PC-9 (cell line): ENCODE measurements at regions of chr3 and their contacts with region 1.

Region 1: GRCh38 chr3:33074217-33075067 is 22.5 kb downstream of the GLB1 start:
- DNase-seq: peak; percentile 38 to 39
- H3K4me3 ChIP-seq: no peak overlapping the region
- H3K27ac ChIP-seq: no peak overlapping the region
- H3K4me1 ChIP-seq: no peaks in the 10 kb centered on the region
- H3K27me3 ChIP-seq: no peaks in the 10 kb centered on the region
- CTCF ChIP-seq: peak; percentile 78

Region 2: DNA sequence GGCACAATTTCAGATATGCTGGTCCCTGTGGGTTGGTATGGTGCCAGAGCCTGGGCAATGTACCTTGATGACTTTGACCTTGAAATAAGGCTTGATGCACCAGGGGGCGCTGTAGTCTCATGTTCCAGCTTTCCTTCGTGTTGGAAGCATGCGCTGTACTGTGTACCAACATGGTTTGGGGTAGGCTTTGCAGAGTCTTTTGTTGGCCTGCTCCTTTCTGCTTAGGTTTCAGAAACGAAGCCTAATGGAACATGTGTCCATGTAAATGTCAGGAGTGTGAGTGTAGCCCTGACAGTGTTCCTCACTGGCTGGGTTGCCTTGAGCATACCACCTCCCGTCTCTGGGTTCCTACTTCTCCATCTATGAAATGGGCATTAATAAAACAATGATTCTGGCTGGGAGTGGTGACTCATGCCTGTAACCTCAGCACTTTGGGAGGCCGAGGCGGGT is 126.6 kb before region 1 on chr3:
- CTCF ChIA-PET with region 1: no interaction called
- POLR2A ChIA-PET with region 1: no interaction called
- intact Hi-C with region 1: loop called (anchors 1 kb)
- DNase-seq: peak; percentile 60 to 78
- H3K4me3 ChIP-seq: no peak overlapping the region
- H3K27ac ChIP-seq: no peak overlapping the region
- H3K4me1 ChIP-seq: no peaks in the 10 kb centered on the region
- H3K27me3 ChIP-seq: no peaks in the 10 kb centered on the region
- CTCF ChIP-seq: peak; percentile 73